ENCODE measurements at regions of chr7 and their contacts with region 1.

Region 1: DNA sequence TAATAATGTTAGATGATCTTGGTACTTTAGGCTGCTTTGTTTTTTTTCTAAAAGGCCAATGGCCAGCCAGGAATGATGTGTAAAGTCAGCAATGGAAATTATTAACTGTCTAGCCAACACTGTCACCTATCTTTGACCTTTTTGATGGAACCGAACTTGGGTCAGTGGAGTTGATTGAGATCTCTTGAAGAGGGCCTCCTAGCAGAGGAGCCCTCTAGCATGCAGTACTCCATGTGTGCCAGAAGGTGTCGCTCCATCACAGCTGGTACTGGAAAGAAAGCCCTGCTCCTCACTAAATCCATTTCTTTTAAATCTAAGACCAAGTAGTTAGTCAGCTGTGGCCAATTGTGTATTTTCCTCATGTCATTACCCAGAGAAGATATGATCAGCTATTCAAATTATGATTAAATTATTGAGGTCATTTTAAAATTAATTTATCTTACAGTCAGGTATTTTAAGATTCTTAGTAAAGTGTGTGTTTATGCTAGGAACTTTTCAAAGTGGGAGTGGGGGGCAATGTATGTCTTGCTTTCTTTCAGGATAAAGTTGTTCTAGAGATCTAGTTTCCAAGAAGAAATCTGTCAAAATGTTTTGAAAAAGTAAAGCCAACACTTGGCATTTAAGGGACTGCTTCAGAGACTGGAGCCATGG is 33.1 kb upstream of the CROT start:
- DNase-seq: no peak
- H3K4me3 ChIP-seq: no peak overlapping the region
- H3K27ac ChIP-seq: no peak overlapping the region
- H3K4me1 ChIP-seq: no peaks in the 10 kb centered on the region
- H3K27me3 ChIP-seq: no peaks in the 10 kb centered on the region
- CTCF ChIP-seq: peak; percentile 85 to 98 (median 97)

Region 2: GRCh38 chr7:87416682-87417587 is 104.6 kb after region 1 on chr7:
- intact Hi-C with region 1: loop called (anchors 1 kb)
- DNase-seq: peak in 1 of 2 donors; percentile 73
- H3K4me3 ChIP-seq: no peak overlapping the region
- H3K27ac ChIP-seq: no peak overlapping the region
- H3K4me1 ChIP-seq: peaks cover 0 to 3% of the 10 kb centered on the region in 2 donors
- H3K27me3 ChIP-seq: no peaks in the 10 kb centered on the region
- CTCF ChIP-seq: peak; percentile 40 to 70 (median 50)

Region 3: GRCh38 chr7:87833130-87833529 is 520.8 kb after region 1 on chr7:
- intact Hi-C with region 1: no loop called
- DNase-seq: no peak
- H3K4me3 ChIP-seq: no peak overlapping the region
- H3K27ac ChIP-seq: no peak overlapping the region
- H3K4me1 ChIP-seq: no peaks in the 10 kb centered on the region
- H3K27me3 ChIP-seq: no peaks in the 10 kb centered on the region
- CTCF ChIP-seq: no peak